H1 (cell line): ENCODE measurements at regions of chr16 and their contacts with region 1.

Region 1: DNA sequence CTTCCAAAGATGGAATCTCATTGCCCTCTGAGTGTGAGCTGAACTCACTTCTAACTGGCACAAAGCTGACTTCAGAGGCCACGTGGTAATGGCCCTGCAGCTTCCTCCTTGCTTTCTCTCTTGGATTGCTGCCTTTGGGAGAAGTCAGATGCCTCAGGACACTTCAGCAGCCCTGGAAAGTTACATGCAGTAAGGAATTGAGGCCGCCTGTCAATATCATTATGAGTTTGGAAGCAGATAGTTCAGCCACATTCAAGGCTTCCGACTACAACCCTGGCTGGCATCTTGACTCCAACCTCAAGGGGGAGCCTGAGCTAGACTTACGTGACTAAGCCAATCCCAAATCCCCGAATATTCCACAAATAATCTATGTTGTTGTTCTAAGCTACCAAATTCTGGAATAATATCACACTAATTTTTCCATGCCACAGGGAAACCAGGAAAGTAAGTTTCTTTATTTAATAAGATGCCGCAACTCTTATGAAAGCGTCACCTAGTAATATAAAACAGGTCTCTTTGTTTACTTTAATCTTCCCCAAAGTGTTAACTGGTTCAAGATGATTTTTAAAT is 13.6 kb downstream of the CEP20 start:
- DNase-seq: peak in 1 of 2 experiments; percentile 59
- H3K4me3 ChIP-seq: no peak overlapping the region
- H3K27ac ChIP-seq: no peak overlapping the region
- H3K4me1 ChIP-seq: no peaks in the 10 kb centered on the region
- H3K27me3 ChIP-seq: no peaks in the 10 kb centered on the region
- CTCF ChIP-seq: peak; percentile 75 to 85 (median 80)
- EP300 ChIP-seq: no peak
- POLR2A ChIP-seq: no peak
- RAD21 ChIP-seq: peak; percentile 78 to 82

Region 2: GRCh38 chr16:15672514-15673167 is 202.2 kb before region 1 on chr16:
- CTCF ChIA-PET with region 1: no interaction called
- POLR2A ChIA-PET with region 1: no interaction called
- DNase-seq: no peak
- H3K4me3 ChIP-seq: no peak overlapping the region
- H3K27ac ChIP-seq: no peak overlapping the region
- H3K4me1 ChIP-seq: no peaks in the 10 kb centered on the region; a peak in 1 of 7 replicates
- H3K27me3 ChIP-seq: no peaks in the 10 kb centered on the region
- CTCF ChIP-seq: no peak
- EP300 ChIP-seq: no peak
- POLR2A ChIP-seq: no peak
- RAD21 ChIP-seq: no peak

Region 3: GRCh38 chr16:15857724-15858560 is 16.9 kb before region 1 on chr16:
- CTCF ChIA-PET with region 1: interaction called, 23 read pairs
- POLR2A ChIA-PET with region 1: interaction called, 6 read pairs
- DNase-seq: peak in 1 of 2 experiments; percentile 73
- H3K4me3 ChIP-seq: peak overlapping the region; percentile 55 to 82 (median 68)
- H3K27ac ChIP-seq: no peak overlapping the region
- H3K4me1 ChIP-seq: no peaks in the 10 kb centered on the region; a peak in 2 of 7 replicates
- H3K27me3 ChIP-seq: peaks cover 4 to 42% (median 31%) of the 10 kb centered on the region in 4 experiments
- CTCF ChIP-seq: no peak
- EP300 ChIP-seq: no peak
- POLR2A ChIP-seq: peak in 1 of 2 experiments; percentile 45; a peak in 2 of 3 replicates
- RAD21 ChIP-seq: no peak

Region 4: GRCh38 chr16:15888072-15888976 is 13.5 kb after region 1 on chr16 and contains the start of gene CEP20:
- CTCF ChIA-PET with region 1: interaction called, 22 read pairs
- POLR2A ChIA-PET with region 1: interaction called, 11 read pairs
- DNase-seq: peak; percentile 98
- H3K4me3 ChIP-seq: peak within 1 kb of the TSS; percentile 97 to 100 (median 98)
- H3K27ac ChIP-seq: peak within 1 kb of the TSS; percentile 85
- H3K4me1 ChIP-seq: peaks cover 3 to 6% (median 5%) of the 10 kb centered on the region in 4 experiments; a peak in 5 of 7 replicates
- H3K27me3 ChIP-seq: no peaks in the 10 kb centered on the region
- CTCF ChIP-seq: no peak
- EP300 ChIP-seq: no peak
- POLR2A ChIP-seq: peak in 1 of 2 experiments; percentile 87; a peak in 2 of 3 replicates
- RAD21 ChIP-seq: no peak
- total RNA-seq, gene CEP20: 33.2 and 49.0 TPM in 2 replicates

Region 5: DNA sequence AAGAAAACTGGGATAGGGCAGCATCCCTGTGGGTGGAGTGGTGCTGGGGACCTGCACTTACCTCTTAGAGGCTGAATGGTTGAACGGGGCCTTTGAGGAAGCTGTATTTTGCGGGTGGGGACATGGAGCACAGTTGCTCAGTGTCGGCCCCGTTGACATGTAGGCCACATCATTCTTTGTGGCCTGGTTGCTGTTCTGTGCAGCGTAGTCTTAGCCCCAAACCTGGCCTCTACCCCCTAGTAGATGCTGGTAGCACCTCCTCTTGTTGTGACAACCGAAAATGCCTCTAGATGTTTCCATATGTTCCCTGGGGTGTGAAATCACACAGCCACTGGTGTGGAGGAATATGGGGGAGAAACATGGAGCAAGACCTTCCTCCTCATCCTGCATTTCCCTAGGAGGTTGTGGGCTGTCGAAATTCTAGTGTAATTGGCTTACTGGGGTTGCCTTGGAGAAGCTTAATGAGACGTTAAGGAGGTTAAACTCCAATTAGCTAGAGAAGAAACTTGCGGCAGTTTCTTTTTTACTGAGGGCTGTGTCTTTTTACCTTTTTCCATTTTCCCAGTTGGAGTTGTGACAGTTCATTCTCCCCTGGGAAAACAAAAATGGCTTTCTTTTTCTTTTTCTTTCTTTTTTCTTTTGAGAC is 84.0 kb after region 1 on chr16:
- CTCF ChIA-PET with region 1: no interaction called
- POLR2A ChIA-PET with region 1: no interaction called
- DNase-seq: no peak
- H3K4me3 ChIP-seq: no peak overlapping the region
- H3K27ac ChIP-seq: no peak overlapping the region
- H3K4me1 ChIP-seq: peaks cover 3 to 10% (median 8%) of the 10 kb centered on the region in 4 experiments; a peak in 5 of 7 replicates
- H3K27me3 ChIP-seq: no peaks in the 10 kb centered on the region
- CTCF ChIP-seq: no peak
- EP300 ChIP-seq: no peak
- POLR2A ChIP-seq: no peak
- RAD21 ChIP-seq: no peak

Region 6: GRCh38 chr16:16025214-16025968 is 150.6 kb after region 1 on chr16:
- CTCF ChIA-PET with region 1: interaction called, 13 read pairs
- POLR2A ChIA-PET with region 1: interaction called, 3 read pairs
- DNase-seq: no peak
- H3K4me3 ChIP-seq: no peak overlapping the region
- H3K27ac ChIP-seq: no peak overlapping the region
- H3K4me1 ChIP-seq: peaks cover 0 to 2% (median 0%) of the 10 kb centered on the region in 4 experiments; a peak in 2 of 7 replicates
- H3K27me3 ChIP-seq: no peaks in the 10 kb centered on the region
- CTCF ChIP-seq: no peak
- EP300 ChIP-seq: no peak
- POLR2A ChIP-seq: no peak
- RAD21 ChIP-seq: no peak

Region 7: DNA sequence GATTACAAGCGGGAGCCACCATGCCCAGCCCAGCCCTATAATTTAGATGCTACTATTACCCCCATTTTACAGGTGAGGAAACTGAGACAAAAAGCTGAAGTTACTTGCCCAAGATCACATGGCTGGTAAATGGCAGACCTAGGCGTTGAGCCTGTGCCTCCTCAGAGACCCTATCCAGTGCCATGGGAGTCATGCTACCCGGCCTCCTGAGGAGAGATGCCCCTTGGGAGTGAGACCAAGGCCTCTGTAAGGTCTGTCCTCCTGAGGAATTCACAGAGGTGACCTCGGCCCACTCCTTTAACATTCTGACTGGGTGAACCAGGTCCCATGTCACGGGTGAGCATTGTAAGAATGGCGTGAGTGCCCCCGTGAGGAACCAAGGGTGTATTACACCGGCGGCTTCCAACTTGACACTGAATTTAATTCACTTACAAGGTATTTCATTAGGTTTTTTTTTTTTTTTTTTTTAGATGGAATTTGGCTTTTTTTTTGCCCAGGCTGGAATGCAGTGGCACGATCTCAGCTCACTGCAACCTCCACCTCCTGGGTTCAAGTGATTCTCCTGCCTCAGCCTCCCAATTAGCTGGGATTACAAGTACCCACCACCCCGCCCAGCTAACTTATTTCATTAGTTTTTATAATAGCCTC is 252.8 kb after region 1 on chr16:
- CTCF ChIA-PET with region 1: interaction called, 16 read pairs
- POLR2A ChIA-PET with region 1: no interaction called
- DNase-seq: peak; percentile 39 to 88
- H3K4me3 ChIP-seq: no peak overlapping the region
- H3K27ac ChIP-seq: no peak overlapping the region
- H3K4me1 ChIP-seq: no peaks in the 10 kb centered on the region
- H3K27me3 ChIP-seq: no peaks in the 10 kb centered on the region
- CTCF ChIP-seq: peak; percentile 66 to 72 (median 69)
- EP300 ChIP-seq: no peak
- POLR2A ChIP-seq: no peak
- RAD21 ChIP-seq: peak; percentile 87 to 89